Activated CD4-positive, alpha-beta memory T cell treated with anti-CD3 and anti-CD28 coated beads for 36 hours (primary cell): ENCODE measurements at regions of chr7 and their contacts with region 1.

Region 1: DNA sequence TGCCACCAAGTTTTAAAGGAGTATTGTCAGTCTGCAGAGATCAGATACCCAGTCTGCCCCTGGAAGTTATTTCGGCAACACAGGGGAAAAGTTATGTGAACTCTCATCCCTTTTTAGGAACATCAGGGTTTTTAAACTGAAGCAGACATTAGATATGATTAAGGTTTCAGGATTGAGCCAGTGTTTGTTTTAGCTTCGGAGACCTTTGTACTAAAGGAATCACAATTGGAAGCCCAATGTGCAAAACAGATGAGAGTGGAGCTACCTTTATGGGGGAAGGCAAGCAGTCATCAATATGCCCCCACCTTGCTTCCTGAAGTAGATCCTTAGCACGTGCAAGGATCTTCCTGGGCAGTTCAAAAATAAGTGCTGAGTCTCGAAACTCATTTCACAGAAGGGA is 39.5 kb downstream of the ETV1 start:
- DNase-seq: no peak
- H3K4me3 Mint-ChIP-seq: no peak overlapping the region
- H3K27ac Mint-ChIP-seq: no peak overlapping the region
- H3K4me1 Mint-ChIP-seq: no peaks in the 10 kb centered on the region
- H3K27me3 Mint-ChIP-seq: no peaks in the 10 kb centered on the region

Region 2: GRCh38 chr7:13879994-13880686 is 69.8 kb before region 1 on chr7:
- CTCF ChIA-PET with region 1: no interaction called
- POLR2A ChIA-PET with region 1: no interaction called
- intact Hi-C with region 1: loop called (anchors 2 kb)
- DNase-seq: no peak
- H3K4me3 Mint-ChIP-seq: no peak overlapping the region
- H3K27ac Mint-ChIP-seq: no peak overlapping the region
- H3K4me1 Mint-ChIP-seq: peaks cover 3% of the 10 kb centered on the region
- H3K27me3 Mint-ChIP-seq: no peaks in the 10 kb centered on the region

Region 3: GRCh38 chr7:13990984-13991790 is 41.2 kb after region 1 on chr7:
- CTCF ChIA-PET with region 1: no interaction called
- POLR2A ChIA-PET with region 1: no interaction called
- intact Hi-C with region 1: no loop called
- DNase-seq: peak; percentile 83
- H3K4me3 Mint-ChIP-seq: no peak overlapping the region
- H3K27ac Mint-ChIP-seq: no peak overlapping the region
- H3K4me1 Mint-ChIP-seq: no peaks in the 10 kb centered on the region
- H3K27me3 Mint-ChIP-seq: peaks cover 3% of the 10 kb centered on the region

Region 4: DNA sequence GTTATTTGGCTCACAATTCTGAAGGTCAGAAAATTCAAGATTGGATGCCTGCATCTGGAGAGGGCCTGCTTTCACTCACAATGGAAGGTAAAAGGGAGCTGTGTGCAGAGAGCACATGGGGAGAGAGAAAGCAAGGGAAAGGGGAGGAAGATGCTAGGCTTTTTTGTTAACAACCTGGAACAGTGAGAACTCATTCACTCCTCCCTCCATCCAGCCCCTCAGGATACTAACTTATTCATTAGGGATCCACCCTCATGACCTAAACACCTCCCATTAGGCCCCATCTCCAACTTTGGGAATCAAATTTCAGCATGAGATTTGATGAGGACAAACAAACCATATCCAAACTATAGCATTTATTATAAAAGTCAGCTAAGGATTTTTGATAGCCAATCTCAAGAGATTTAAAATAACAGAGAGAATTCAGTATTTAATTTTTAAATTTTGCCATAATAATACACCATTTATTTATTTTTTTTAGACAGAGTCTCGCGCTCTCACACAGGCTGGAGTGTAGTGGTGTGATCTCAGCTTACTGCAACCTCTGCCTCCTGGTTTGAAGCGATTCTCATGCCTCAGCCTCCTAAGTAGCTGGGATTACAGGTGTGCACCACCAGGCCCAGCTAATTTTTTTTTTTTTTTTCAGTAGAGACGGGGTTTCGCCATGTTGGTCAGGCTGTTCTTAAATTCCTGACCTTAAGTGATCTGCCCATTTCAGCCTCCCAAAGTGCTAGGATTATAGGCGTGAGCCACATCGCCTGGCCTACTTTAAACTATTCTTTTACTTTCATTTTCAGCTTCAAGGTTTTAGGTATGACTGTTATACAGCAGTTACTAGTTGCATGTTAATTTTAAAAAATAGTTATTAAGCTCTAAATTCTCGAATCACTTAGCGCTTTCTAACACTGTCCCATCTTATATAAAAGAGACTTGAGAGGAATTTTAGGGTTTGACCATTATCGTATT is 59.8 kb after region 1 on chr7:
- CTCF ChIA-PET with region 1: no interaction called
- POLR2A ChIA-PET with region 1: no interaction called
- intact Hi-C with region 1: no loop called
- DNase-seq: no peak
- H3K4me3 Mint-ChIP-seq: no peak overlapping the region
- H3K27ac Mint-ChIP-seq: no peak overlapping the region
- H3K4me1 Mint-ChIP-seq: peaks cover 2% of the 10 kb centered on the region
- H3K27me3 Mint-ChIP-seq: peaks cover 1% of the 10 kb centered on the region

Region 5: GRCh38 chr7:14233076-14233867 is 283.3 kb after region 1 on chr7:
- CTCF ChIA-PET with region 1: no interaction called
- POLR2A ChIA-PET with region 1: no interaction called
- intact Hi-C with region 1: no loop called
- DNase-seq: no peak
- H3K4me3 Mint-ChIP-seq: no peak overlapping the region
- H3K27ac Mint-ChIP-seq: no peak overlapping the region
- H3K4me1 Mint-ChIP-seq: no peaks in the 10 kb centered on the region
- H3K27me3 Mint-ChIP-seq: no peaks in the 10 kb centered on the region